Heart left ventricle (tissue), 16 donors: ENCODE measurements at regions of chr4 and their contacts with region 1.

Region 1: GRCh38 chr4:87422104-87423052 is at the start of gene NUDT9:
- DNase-seq: peak; percentile 95 to 98 (median 96)
- ATAC-seq: peak; percentile 93 to 98 (median 97)
- H3K4me3 ChIP-seq: peak within 1 kb of the TSS; percentile 59 to 99 (median 80)
- H3K27ac ChIP-seq: peak within 1 kb of the TSS; percentile 83 to 97 (median 90)
- H3K4me1 ChIP-seq: peaks cover 0 to 34% (median 24%) of the 10 kb centered on the region in 12 donors
- H3K27me3 ChIP-seq: no peaks in the 10 kb centered on the region
- CTCF ChIP-seq: no peak
- POLR2A ChIP-seq: peak in 1 of 2 donors; percentile 69
- total RNA-seq, gene NUDT9: 17.1 to 29.7 (median 24.0) TPM

Region 2: DNA sequence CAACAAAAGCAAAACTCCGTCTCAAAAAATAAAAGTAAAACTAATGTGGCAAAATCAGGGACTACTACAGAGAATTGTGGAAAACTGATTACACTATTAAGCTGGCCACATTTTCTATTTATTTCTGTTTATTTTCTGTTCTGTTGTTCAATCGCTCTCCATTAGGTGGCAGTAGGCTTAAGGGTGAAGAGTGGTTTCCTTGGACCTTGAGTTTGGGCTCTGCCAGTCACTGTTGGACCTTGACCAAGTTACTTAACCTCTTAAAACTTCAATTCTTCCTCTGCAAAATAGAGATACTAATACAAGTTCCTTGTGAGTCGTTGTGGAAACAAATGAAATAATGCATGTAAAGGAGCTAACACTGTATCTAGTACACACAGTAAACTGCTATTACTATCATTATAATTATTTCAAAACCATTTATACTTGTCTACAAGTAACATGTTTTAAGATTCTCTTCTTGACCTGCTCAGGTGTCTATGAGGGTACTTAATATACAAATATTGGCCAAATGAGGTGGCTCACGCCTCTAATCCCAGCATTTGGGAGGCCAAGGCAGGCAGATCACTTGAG is 46.6 kb before region 1 on chr4:
- intact Hi-C with region 1: loop called in 3 of 10 experiments (anchors 5 kb)
- DNase-seq: no peak
- ATAC-seq: peak; percentile 55 to 86 (median 65)
- H3K4me3 ChIP-seq: no peak overlapping the region
- H3K27ac ChIP-seq: peak overlapping the region in 1 of 12 donors; percentile 25
- H3K4me1 ChIP-seq: peaks cover 0 to 9% (median 3%) of the 10 kb centered on the region in 12 donors
- H3K27me3 ChIP-seq: no peaks in the 10 kb centered on the region
- CTCF ChIP-seq: peak; percentile 44 to 80 (median 68)
- POLR2A ChIP-seq: no peak

Region 3: DNA sequence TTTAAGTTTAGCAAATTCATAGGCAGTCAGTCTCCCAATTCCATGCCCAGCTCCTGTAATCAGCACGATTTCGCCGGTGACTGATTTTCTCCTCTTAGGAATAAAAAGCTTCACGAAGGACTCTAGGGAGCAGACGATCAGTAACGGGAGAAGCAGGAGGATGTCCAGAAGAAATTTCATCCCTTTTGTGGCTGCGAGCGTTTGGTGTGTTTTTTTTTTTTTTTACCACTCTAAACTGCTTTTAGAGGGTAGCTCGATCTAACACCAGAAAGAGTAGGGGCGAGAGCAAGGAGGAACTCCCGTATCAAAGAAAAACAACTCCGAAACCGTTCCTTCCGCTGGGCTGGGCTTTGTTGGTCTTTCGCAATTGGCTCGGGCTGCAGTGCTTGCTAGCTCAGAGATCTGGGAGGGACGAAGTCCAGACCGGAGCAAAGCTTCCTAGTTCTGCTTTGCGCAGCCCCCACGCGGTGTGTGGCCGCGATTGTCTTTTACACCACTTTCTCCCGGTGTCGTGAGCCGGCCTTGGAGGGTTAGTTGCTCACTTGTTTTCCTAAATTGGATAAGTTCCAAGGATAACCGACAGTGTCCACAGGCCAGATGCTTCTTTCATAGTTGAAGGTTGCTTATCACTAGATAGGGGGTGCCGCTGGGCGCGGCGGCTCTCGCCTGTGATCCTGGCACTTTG is 31.3 kb before region 1 on chr4 and contains the start of gene HSD17B11:
- intact Hi-C with region 1: loop called in 3 of 10 experiments (anchors 1 to 5 kb)
- DNase-seq: peak; percentile 89 to 92 (median 91)
- ATAC-seq: peak; percentile 98 to 100 (median 100)
- H3K4me3 ChIP-seq: peak within 1 kb of the TSS; percentile 55 to 82 (median 70)
- H3K27ac ChIP-seq: peak within 1 kb of the TSS; percentile 73 to 94 (median 88)
- H3K4me1 ChIP-seq: peaks cover 0 to 43% (median 11%) of the 10 kb centered on the region in 12 donors
- H3K27me3 ChIP-seq: no peaks in the 10 kb centered on the region
- CTCF ChIP-seq: peak in 5 of 12 donors; percentile 10 to 41 (median 36)
- POLR2A ChIP-seq: peak in 1 of 2 donors; percentile 89
- total RNA-seq, gene HSD17B11: 6.6 to 28.0 (median 13.4) TPM

Region 4: DNA sequence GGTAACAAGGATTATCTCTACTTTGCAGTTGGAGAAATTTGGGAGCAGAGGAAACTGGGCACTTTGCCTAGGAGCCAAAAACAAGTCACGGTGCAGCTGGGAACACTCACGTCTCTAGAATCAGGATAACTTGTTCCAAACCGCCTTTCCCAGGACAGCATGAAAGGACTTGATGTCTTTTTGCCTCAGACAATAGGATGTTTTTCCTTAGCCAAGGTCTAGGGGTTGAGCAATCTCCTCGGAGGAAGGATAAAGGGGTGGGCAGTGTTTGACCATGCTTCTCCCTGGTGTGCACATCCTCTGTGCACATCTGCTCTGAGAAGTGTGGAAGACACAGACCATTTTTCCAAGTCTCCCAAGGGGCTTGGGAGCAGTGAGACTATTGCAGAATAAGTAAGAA is 108.5 kb after region 1 on chr4:
- intact Hi-C with region 1: loop called in 1 of 10 experiments (anchors 5 kb)
- DNase-seq: peak; percentile 64 to 86 (median 78)
- ATAC-seq: peak; percentile 90 to 96 (median 92)
- H3K4me3 ChIP-seq: peak overlapping the region in 9 of 12 donors; percentile 49 to 64 (median 61)
- H3K27ac ChIP-seq: peak overlapping the region; percentile 74 to 93 (median 84)
- H3K4me1 ChIP-seq: peaks cover 0 to 37% (median 24%) of the 10 kb centered on the region in 12 donors
- H3K27me3 ChIP-seq: no peaks in the 10 kb centered on the region
- CTCF ChIP-seq: no peak
- POLR2A ChIP-seq: peak in 1 of 2 donors; percentile 56